ENCODE measurements at regions of chr10 and their contacts with region 1.

Region 1: GRCh38 chr10:86688398-86688921 is 20.1 kb downstream of the LDB3 start:
- DNase-seq: peak; percentile 68
- H3K4me3 ChIP-seq: no peak overlapping the region
- H3K27ac ChIP-seq: no peak overlapping the region
- H3K4me1 ChIP-seq: no peaks in the 10 kb centered on the region
- CTCF ChIP-seq: peak; percentile 84

Region 2: DNA sequence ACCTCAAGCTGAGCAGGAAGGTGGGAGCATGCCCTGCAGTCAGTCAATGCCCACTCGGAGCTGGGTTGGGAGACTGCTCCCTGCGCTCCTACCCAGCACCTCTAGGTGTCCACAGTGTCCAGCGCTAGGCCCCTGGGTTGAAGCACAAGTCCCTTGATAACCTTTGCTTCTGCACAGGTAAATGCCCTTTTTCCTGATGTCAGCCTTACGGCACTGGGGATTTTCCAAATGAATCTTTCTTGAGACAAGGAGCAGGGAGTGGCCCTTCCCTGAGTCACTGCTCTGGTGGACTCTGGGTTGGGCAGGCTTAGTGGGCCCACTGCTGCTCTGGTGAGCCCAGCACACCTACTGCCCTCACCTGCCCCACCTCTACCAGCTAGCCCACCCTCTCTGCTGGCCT is 96.0 kb before region 1 on chr10:
- CTCF ChIA-PET with region 1: no interaction called
- POLR2A ChIA-PET with region 1: no interaction called
- intact Hi-C with region 1: loop called (anchors 2 kb)
- DNase-seq: no peak
- H3K4me3 ChIP-seq: no peak overlapping the region
- H3K27ac ChIP-seq: no peak overlapping the region
- H3K4me1 ChIP-seq: no peaks in the 10 kb centered on the region
- CTCF ChIP-seq: no peak

Region 3: GRCh38 chr10:86899670-86900276 is 211.3 kb after region 1 on chr10:
- CTCF ChIA-PET with region 1: interaction called, 4 read pairs
- POLR2A ChIA-PET with region 1: no interaction called
- intact Hi-C with region 1: loop called (anchors 2 kb)
- DNase-seq: peak; percentile 33
- H3K4me3 ChIP-seq: no peak overlapping the region
- H3K27ac ChIP-seq: no peak overlapping the region
- H3K4me1 ChIP-seq: no peaks in the 10 kb centered on the region
- CTCF ChIP-seq: peak; percentile 76; the same call in 1 of the 2 replicates

Measured in OCI-LY7 (cell line).